Aorta (tissue), 5 donors: ENCODE measurements at regions of chr11 and their contacts with region 1.

Region 1: DNA sequence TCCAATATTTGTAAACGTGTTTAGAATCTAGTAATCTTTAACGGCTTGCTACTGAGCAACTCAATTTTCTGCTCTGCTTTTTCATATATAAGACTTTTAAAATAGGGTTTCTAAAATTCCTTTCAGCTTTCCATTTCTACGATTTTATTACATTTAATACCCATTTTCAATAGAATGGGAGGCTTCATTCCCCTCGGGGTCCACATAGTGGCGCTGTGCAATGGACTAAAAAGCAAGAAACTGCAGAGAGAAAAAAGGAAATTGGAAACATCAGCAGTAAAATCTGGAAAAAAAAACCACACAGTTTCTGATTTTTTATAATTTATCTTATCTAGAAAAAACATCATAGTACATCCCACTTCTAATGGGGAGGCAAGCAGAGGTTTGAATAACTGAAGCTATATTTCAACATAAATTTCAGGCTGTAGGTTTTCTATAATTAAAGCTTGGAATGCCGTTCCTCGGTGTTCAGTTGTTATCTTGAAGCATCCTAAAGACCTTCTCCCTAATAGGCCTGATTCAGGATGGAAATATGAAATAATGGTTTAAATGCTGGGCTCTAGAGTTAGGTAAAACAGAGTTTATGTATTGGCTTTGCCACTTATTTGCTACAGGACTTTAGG is 18.7 kb upstream of the JHY start:
- DNase-seq: peak in 1 of 2 donors; percentile 69
- ATAC-seq: no peak
- H3K4me3 ChIP-seq: no peak overlapping the region
- H3K27ac ChIP-seq: no peak overlapping the region
- H3K4me1 ChIP-seq: no peaks in the 10 kb centered on the region
- H3K27me3 ChIP-seq: no peaks in the 10 kb centered on the region

Region 2: GRCh38 chr11:123020968-123021367 is 157.2 kb after region 1 on chr11:
- intact Hi-C with region 1: loop called (anchors 2 kb)
- DNase-seq: no peak
- ATAC-seq: no peak
- H3K4me3 ChIP-seq: no peak overlapping the region
- H3K27ac ChIP-seq: no peak overlapping the region
- H3K4me1 ChIP-seq: no peaks in the 10 kb centered on the region
- H3K27me3 ChIP-seq: no peaks in the 10 kb centered on the region

Region 3: GRCh38 chr11:123054301-123055065 is 190.7 kb after region 1 on chr11:
- intact Hi-C with region 1: loop called in 1 of 2 experiments (anchors 10 kb)
- DNase-seq: no peak
- ATAC-seq: peak; percentile 90
- H3K4me3 ChIP-seq: no peak overlapping the region
- H3K27ac ChIP-seq: no peak overlapping the region
- H3K4me1 ChIP-seq: no peaks in the 10 kb centered on the region
- H3K27me3 ChIP-seq: no peaks in the 10 kb centered on the region